Ascending aorta (tissue), 2 donors: ENCODE measurements at regions of chr2 and their contacts with region 1.

Region 1: GRCh38 chr2:203814661-203815540 is 52.7 kb upstream of the CTLA4 start:
- DNase-seq: peak; percentile 26 to 75
- H3K4me3 ChIP-seq: peak overlapping the region in 1 of 2 donors; percentile 38
- H3K27ac ChIP-seq: peak overlapping the region in 1 of 2 donors; percentile 20
- H3K4me1 ChIP-seq: no peaks in the 10 kb centered on the region
- H3K27me3 ChIP-seq: no peaks in the 10 kb centered on the region
- CTCF ChIP-seq: peak; percentile 69 to 89 (median 84)

Region 2: DNA sequence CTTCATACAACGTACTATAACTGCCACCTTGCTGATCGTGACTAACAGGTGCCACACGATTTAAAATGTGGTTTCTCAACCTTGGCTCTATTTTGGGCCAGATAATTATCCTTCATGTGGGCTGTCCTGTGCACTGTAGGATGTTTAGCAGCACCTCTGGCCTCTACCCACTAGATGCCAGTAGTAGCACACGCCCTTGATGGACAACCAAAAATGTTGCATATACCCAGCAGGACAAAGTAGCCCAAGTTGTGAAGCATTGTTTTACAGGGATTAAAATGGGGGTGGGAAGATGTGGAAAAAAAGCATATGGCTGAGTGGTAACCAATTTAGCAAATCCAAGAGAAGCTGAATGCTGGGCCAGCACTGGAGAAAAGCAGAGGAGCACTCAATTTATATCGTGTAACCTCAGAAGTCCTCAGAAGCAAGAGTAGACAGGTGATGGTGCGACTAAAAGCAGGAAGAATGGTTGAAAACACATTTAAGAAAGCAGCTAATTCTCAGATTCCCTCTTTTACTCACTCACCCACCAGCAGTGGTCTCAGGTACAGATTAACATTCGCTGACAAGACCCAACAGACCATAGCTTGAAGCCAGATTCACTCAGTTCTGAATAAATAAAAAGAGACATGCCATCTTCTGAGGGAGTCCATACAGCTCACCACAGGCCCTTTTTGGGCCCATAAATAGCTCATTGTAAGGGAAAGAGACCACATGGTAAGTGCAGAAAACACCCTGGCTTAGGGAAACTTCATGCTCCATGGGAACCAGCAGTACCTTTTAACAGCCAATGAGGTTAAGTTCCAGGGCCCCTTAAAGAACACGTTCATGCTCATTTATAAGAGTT is 330.4 kb before region 1 on chr2:
- intact Hi-C with region 1: loop called (anchors 1 kb)
- DNase-seq: no peak
- H3K4me3 ChIP-seq: no peak overlapping the region
- H3K27ac ChIP-seq: no peak overlapping the region
- H3K4me1 ChIP-seq: no peaks in the 10 kb centered on the region
- H3K27me3 ChIP-seq: no peaks in the 10 kb centered on the region
- CTCF ChIP-seq: peak; percentile 63 to 73 (median 64)

Region 3: GRCh38 chr2:203650860-203651613 is 163.9 kb before region 1 on chr2:
- intact Hi-C with region 1: loop called (anchors 10 kb)
- DNase-seq: no peak
- H3K4me3 ChIP-seq: no peak overlapping the region
- H3K27ac ChIP-seq: peak overlapping the region; percentile 56 to 70
- H3K4me1 ChIP-seq: peaks cover 7 to 16% of the 10 kb centered on the region in 2 donors
- H3K27me3 ChIP-seq: no peaks in the 10 kb centered on the region
- CTCF ChIP-seq: peak; percentile 17 to 46 (median 18)

Region 4: DNA sequence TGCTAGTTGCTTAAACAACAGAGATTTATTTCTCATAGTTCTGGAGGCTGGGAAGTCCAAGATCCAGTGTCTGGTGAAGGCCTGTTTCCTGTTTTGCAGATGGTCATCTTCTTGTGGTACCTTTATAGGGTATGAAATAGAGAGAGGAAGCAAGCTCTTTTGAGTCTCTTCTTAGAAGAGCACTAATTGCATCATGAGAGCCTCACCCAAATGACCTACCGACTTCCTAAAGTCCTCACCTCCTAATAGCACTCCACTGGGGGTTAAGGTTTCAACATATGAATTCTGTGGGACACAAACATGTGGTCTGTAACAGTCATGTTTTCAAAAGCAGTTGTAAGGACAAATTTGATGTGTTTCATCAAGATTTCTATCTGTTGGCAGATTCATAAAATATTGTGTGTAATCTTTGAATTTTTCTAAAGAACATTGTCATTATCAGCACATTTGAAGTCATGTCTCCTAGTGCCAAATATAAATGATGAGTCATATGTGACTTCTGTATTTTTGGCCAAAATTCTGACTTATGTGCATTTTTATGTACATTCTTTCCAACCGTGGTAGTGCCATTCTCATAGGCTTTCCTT is 63.1 kb before region 1 on chr2:
- intact Hi-C with region 1: no loop called
- DNase-seq: no peak
- H3K4me3 ChIP-seq: no peak overlapping the region
- H3K27ac ChIP-seq: no peak overlapping the region
- H3K4me1 ChIP-seq: no peaks in the 10 kb centered on the region
- H3K27me3 ChIP-seq: no peaks in the 10 kb centered on the region
- CTCF ChIP-seq: no peak

Region 5: GRCh38 chr2:203909974-203910373 is 95.1 kb after region 1 on chr2:
- intact Hi-C with region 1: loop called (anchors 5 kb)
- DNase-seq: no peak
- H3K4me3 ChIP-seq: peak overlapping the region in 1 of 2 donors; percentile 41
- H3K27ac ChIP-seq: peak overlapping the region; percentile 19 to 31
- H3K4me1 ChIP-seq: peaks cover 3 to 7% of the 10 kb centered on the region in 2 donors
- H3K27me3 ChIP-seq: no peaks in the 10 kb centered on the region
- CTCF ChIP-seq: no peak